Dorsolateral prefrontal cortex (tissue), 120 donors: ENCODE measurements at regions of chr7 and their contacts with region 1.

Region 1: GRCh38 chr7:55893940-55894339 is 6.7 kb downstream of the ZNF713 start:
- DNase-seq: no peak
- H3K4me3 ChIP-seq: no peak overlapping the region
- H3K27ac ChIP-seq: peak overlapping the region in 1 of 59 donors; percentile 1
- H3K27me3 ChIP-seq: no peaks in the 10 kb centered on the region
- CTCF ChIP-seq: no peak

Region 2: DNA sequence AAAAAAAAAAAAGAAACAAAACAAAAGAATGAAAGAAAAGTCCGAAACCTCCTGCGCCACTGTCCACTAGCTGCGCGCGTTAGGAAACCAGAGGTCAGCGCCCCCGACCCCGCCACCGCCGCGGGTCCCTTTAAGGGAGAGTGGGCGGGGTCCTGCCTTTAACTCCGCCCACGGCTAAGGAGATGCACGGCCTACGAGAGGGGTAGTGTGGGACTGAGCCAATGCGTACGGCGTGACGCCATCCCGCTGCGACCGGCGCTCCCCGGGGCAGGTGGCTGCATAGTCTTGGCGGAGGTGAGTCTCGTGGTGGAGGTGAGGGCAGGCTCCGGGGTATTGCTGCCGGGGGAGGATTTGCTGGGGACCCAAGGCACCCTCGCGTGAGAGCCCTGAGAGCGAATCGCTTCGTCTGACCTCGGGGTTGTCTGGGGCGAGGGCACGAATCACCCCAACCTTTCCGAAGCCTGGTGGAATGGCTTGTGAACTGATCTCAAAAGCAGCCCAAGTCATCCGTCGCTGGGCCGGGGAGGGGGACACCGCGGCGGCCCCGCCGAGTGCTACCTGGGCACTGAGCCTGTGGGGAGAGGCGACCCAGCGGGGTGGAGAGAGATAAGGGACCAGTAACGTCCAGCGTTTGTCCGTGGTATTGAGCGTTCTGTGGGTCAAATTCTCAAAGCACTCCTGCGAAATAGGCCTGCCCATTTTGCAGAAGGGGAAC is 57.9 kb after region 1 on chr7 and contains the start of gene MRPS17:
- intact Hi-C with region 1: loop called in 1 of 2 experiments (anchors 5 kb)
- DNase-seq: peak; percentile 84 to 96 (median 94)
- H3K4me3 ChIP-seq: peak within 1 kb of the TSS; percentile 44 to 98 (median 88)
- H3K27ac ChIP-seq: peak within 1 kb of the TSS in 50 of 59 donors; percentile 1 to 89 (median 66)
- H3K27me3 ChIP-seq: no peaks in the 10 kb centered on the region
- CTCF ChIP-seq: peak in 13 of 56 donors; percentile 3 to 37 (median 17)
- total RNA-seq, gene MRPS17: 5.8 to 24.3 (median 17.4) TPM